Activated naive CD4-positive, alpha-beta T cell treated with anti-CD3 and anti-CD28 coated beads, Interleukin-2, amount 10 ng/mL, durations not matched to agents 7 days and 5 days (primary cell): ENCODE measurements at regions of chr11 and their contacts with region 1.

Region 1: DNA sequence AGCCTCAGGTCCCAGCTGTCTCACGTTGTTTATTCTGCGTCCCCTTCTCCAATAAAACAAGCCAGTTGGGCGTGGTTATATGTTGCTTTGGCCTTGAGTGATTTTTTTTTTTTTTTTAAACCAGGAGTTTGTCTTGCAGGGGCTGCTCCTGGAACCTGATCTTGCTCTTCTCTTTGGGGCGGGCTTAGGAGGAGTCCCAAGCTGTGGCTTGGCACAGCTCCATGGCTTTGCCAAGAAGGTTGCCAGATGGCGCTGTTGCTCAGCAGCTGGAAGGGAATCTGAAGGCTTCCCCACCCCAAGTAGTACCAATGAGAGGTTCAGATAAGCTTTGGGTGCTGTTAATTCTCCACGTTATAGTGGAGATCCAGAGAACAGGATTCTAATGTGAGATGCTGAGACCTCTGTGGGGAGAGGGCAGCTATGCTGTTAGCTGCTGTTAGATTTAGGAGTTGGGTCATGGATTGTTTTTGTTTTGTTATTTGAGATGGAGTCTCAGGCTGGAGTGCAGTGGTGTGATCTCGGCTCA is 2.0 kb upstream of the FERMT3 start:
- DNase-seq: peak; percentile 90
- H3K4me3 Mint-ChIP-seq: peak overlapping the region; percentile 71
- H3K27ac Mint-ChIP-seq: peak overlapping the region; percentile 86
- H3K4me1 Mint-ChIP-seq: peaks cover 48% of the 10 kb centered on the region
- H3K27me3 Mint-ChIP-seq: no peaks in the 10 kb centered on the region

Region 2: DNA sequence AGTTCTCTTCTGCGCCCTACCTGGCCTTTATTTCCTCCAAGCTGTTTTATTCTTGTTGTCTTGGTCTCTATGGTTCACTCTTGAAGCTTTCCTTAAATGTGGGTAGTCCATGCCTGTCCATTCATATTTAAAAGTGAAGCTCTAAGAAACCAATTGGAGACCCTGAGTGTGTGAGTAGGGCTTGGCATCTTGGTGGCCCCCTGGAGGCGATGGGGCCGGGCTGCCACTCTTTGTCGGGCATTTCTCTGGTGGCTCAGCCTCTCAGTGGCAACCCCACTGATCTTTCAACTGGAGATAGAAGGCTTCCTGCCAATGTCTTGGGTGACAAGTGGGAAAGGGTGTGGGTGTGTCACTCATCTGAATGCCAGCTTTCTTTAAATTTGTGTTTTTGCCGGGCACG is 12.4 kb after region 1 on chr11:
- CTCF ChIA-PET with region 1: interaction called, 28 read pairs
- DNase-seq: no peak
- H3K4me3 Mint-ChIP-seq: no peak overlapping the region
- H3K27ac Mint-ChIP-seq: no peak overlapping the region
- H3K4me1 Mint-ChIP-seq: peaks cover 13% of the 10 kb centered on the region
- H3K27me3 Mint-ChIP-seq: no peaks in the 10 kb centered on the region

Region 3: GRCh38 chr11:64225612-64226506 is 21.3 kb after region 1 on chr11 and contains the starts of genes NUDT22 and TRPT1:
- CTCF ChIA-PET with region 1: interaction called, 48 read pairs
- DNase-seq: peak; percentile 95
- H3K4me3 Mint-ChIP-seq: peak within 1 kb of the TSS; percentile 86
- H3K27ac Mint-ChIP-seq: peak within 1 kb of the TSS; percentile 87
- H3K4me1 Mint-ChIP-seq: peaks cover 46% of the 10 kb centered on the region
- H3K27me3 Mint-ChIP-seq: no peaks in the 10 kb centered on the region

Region 4: GRCh38 chr11:64241428-64242153 is 37.1 kb after region 1 on chr11:
- CTCF ChIA-PET with region 1: interaction called, 25 read pairs
- DNase-seq: peak; percentile 100
- H3K4me3 Mint-ChIP-seq: peak overlapping the region; percentile 90
- H3K27ac Mint-ChIP-seq: peak overlapping the region; percentile 93
- H3K4me1 Mint-ChIP-seq: peaks cover 65% of the 10 kb centered on the region
- H3K27me3 Mint-ChIP-seq: no peaks in the 10 kb centered on the region

Region 5: GRCh38 chr11:64246871-64247728 is 42.6 kb after region 1 on chr11 and contains the start of gene PPP1R14B:
- CTCF ChIA-PET with region 1: interaction called, 31 read pairs
- DNase-seq: peak; percentile 89
- H3K4me3 Mint-ChIP-seq: peak within 1 kb of the TSS; percentile 92
- H3K27ac Mint-ChIP-seq: peak within 1 kb of the TSS; percentile 87
- H3K4me1 Mint-ChIP-seq: peaks cover 56% of the 10 kb centered on the region
- H3K27me3 Mint-ChIP-seq: peaks cover 15% of the 10 kb centered on the region

Region 6: DNA sequence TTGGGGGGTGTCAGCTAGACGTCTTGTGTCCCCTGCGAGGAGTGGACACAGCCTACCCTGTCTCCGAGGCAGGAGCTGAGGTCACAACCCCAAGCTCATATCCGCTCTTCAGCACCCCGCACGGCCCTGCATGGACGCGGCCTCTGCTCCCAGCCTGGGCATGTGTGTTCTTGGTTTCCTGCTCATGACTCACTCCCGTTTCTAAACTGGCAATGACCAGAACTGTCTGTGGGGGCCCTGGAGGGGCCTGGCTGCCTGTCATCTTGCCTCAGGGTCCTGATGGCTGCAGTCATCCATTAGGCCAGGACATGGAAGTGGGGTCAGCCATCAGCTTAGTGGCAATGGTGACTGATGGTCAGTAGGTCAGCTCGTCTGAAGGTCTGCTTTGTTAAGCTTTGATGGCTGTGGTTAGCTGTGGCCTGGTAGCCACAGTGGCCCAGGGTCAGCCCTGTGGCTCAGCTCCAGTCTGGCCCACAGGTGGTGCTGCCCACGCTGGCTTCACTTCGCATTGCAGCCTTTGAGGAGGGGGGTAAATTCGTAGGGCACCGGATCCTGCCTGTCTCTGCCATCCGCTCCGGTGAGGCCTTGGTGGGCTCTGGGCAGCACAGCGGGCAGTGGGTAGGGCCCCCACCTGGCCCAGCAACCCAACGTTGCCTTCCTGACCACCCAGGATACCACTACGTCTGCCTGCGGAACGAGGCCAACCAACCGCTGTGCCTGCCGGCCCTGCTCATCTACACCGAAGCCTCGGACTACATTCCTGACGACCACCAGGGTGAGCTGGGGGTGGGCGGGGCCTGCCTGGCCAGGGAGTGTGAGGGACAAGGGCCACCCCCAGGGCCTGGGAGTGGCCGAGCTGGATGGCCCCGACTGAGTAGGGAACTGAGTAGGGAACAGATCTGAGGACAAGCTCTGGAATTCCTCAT is 58.8 kb after region 1 on chr11:
- CTCF ChIA-PET with region 1: no interaction called
- DNase-seq: no peak
- H3K4me3 Mint-ChIP-seq: no peak overlapping the region
- H3K27ac Mint-ChIP-seq: no peak overlapping the region
- H3K4me1 Mint-ChIP-seq: peaks cover 14% of the 10 kb centered on the region
- H3K27me3 Mint-ChIP-seq: no peaks in the 10 kb centered on the region

Region 7: GRCh38 chr11:64386306-64386702 is 181.8 kb after region 1 on chr11:
- CTCF ChIA-PET with region 1: no interaction called
- DNase-seq: no peak
- H3K4me3 Mint-ChIP-seq: no peak overlapping the region
- H3K27ac Mint-ChIP-seq: no peak overlapping the region
- H3K4me1 Mint-ChIP-seq: peaks cover 10% of the 10 kb centered on the region
- H3K27me3 Mint-ChIP-seq: peaks cover 38% of the 10 kb centered on the region